Vagina (tissue), 2 donors: ENCODE measurements at regions of chr6 and their contacts with region 1.

Region 1: DNA sequence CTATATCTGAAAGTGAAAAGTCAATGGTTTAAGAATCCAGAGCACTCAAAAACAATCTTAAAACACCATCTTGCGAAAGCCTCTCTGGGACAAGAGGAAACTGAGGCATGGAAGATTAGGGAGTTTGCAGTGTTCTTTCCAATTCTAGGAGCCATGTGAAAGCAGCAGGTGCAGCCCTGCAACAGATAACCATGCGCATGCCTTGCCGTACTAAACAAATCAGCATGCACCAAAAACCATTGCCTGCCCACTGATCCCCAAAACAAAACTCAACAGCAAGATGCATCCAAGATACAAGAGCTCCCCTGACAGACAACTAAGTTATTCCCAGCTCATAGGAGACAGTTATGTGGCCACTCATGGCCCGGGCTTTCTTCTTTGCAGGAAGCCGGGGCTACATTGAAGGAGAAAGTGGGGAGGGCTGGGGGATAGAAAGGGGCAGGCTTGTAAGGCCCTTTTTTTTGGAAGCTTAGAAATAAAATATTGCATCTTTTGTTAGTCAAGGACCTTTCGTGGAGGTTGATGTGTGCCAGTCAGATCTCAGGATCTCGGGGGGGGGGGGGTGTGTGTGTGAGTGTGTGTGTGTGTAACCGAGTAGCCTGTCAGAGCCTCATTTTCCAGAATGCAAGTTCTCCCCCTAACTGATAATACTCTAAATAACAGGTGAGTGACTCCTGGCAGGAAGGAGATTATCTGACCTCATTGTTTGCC is 178.4 kb downstream of the MBOAT1 start:
- DNase-seq: no peak
- H3K4me3 ChIP-seq: no peak overlapping the region
- H3K27ac ChIP-seq: no peak overlapping the region
- H3K4me1 ChIP-seq: no peaks in the 10 kb centered on the region
- H3K27me3 ChIP-seq: no peaks in the 10 kb centered on the region
- CTCF ChIP-seq: no peak
- POLR2A ChIP-seq: no peak

Region 2: GRCh38 chr6:18099511-18099910 is 1934.3 kb before region 1 on chr6:
- intact Hi-C with region 1: loop called (anchors 5 kb)
- DNase-seq: no peak
- H3K4me3 ChIP-seq: no peak overlapping the region
- H3K27ac ChIP-seq: no peak overlapping the region
- H3K4me1 ChIP-seq: no peaks in the 10 kb centered on the region
- H3K27me3 ChIP-seq: no peaks in the 10 kb centered on the region
- CTCF ChIP-seq: no peak
- POLR2A ChIP-seq: no peak

Region 3: DNA sequence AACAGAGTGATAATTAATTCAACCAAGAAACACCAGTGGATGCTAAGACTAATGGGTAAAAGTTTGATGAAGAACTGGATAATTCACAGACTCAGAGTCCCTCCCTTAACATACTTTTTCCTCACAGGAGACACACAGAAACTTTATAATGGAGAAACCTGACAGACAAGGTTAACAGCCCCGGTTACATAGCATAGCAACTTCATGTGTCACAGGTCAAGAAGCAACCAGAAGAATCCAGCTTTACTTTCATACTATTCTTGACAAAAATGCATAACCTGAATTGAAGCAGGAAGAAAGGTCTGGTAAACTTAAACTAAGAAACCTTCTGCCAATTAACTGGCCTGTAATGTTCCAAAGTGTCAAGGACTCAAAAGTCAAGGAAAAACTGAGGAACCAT is 1270.8 kb before region 1 on chr6:
- intact Hi-C with region 1: no loop called
- DNase-seq: no peak
- H3K4me3 ChIP-seq: no peak overlapping the region
- H3K27ac ChIP-seq: no peak overlapping the region
- H3K4me1 ChIP-seq: no peaks in the 10 kb centered on the region
- H3K27me3 ChIP-seq: no peaks in the 10 kb centered on the region
- CTCF ChIP-seq: no peak
- POLR2A ChIP-seq: no peak

Region 4: DNA sequence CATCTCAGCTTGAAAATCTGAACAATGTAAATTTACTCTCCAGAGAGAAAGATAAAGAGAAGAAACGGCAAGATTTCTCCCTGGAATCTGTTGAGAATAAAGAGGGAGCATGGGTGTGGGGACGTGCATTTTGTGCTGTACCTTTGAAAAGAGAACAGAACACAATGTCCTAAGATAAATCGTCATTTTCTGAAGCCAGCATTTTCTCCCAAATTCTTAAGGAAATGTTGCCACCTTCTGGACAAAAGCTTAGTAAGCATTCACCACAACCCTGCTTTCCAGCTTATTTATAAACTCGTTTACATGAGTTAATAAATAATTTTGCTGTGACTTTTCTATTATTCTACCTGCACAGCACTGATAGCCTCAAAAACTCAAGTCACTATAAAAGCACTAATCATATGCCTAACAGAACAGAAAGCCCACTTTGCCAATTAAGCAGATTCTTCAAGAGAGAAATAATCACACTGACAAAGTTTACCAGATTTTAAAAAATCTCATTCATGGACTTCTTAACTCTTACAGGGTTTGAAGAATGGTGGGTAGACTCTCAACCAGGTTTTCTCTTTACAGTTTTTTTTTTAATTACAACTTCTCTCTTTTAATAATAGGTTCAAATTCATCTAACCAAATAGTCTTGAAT is 22.6 kb after region 1 on chr6:
- intact Hi-C with region 1: no loop called
- DNase-seq: no peak
- H3K4me3 ChIP-seq: no peak overlapping the region
- H3K27ac ChIP-seq: no peak overlapping the region
- H3K4me1 ChIP-seq: no peaks in the 10 kb centered on the region
- H3K27me3 ChIP-seq: no peaks in the 10 kb centered on the region
- CTCF ChIP-seq: peak; percentile 36 to 63 (median 49)
- POLR2A ChIP-seq: no peak